HepG2 (cell line): ENCODE measurements at regions of chr22 and their contacts with region 1.

Region 1: DNA sequence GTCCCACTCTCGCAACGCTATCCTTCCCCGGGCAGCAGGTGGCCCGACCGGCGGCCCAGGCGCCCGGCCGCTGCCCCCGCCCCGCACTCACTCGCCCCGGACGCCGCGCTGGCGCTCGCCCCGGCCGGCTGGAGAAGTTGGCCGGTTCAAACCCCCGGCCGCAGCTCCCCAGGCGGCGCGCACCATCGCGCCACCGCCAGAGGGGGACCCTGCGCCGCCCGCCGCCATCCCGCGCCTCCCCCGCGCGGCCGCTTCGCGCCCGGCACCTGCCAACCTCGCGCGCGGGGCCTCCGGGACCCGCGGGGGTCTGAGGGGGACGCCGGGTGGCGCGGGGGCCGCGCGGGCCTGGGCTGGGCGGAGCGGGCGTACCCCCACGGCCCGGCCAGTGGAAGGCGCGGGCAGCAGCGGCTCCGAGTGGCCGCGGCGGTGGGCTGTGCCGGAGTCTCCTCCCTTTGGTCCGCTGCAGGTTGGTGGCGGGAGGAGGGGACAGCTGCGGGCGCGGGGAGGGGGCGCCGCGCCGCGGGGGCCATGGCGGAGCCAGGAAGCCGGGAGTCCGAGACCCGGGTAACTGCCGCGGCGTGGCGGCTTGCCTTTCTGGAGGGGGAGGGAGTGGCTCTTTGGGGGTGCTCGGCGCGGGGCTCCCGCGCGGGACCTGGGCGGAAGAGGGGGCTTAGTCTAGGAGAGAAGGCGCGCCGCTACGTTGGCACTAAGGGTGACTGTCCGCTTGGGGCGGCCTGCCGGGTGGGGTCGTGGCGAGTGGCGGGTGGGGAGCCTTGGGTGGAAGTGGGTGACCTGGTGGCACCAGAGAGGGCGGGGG is at the starts of genes MPST and TST:
- DNase-seq: peak; percentile 62
- ATAC-seq: peak; percentile 74
- H3K4me3 ChIP-seq: peak within 1 kb of the TSS; percentile 86 to 94 (median 92)
- H3K27ac ChIP-seq: peak within 1 kb of the TSS; percentile 88
- H3K4me1 ChIP-seq: peaks cover 79% of the 10 kb centered on the region
- H3K27me3 ChIP-seq: no peaks in the 10 kb centered on the region; a peak in 1 of 5 replicates
- CTCF ChIP-seq: 0 out of 2 replicates have a peak, but pooled peaks have one; percentile 8
- EP300 ChIP-seq: no peak
- POLR2A ChIP-seq: peak; percentile 65 to 85
- RAD21 ChIP-seq: peak; percentile 31; the same call in 1 of the 2 replicates
- total RNA-seq, gene MPST: 94.8 and 133 TPM in 2 replicates
- total RNA-seq, gene TST: 44.1 and 44.6 TPM in 2 replicates

Region 2: GRCh38 chr22:36986242-36986821 is 33.2 kb before region 1 on chr22:
- CTCF ChIA-PET with region 1: no interaction called
- POLR2A ChIA-PET with region 1: no interaction called
- in situ Hi-C with region 1: no loop called
- intact Hi-C with region 1: loop called (anchors 5 kb)
- DNase-seq: no peak
- ATAC-seq: no peak
- H3K4me3 ChIP-seq: no peak overlapping the region
- H3K27ac ChIP-seq: no peak overlapping the region
- H3K4me1 ChIP-seq: no peaks in the 10 kb centered on the region
- H3K27me3 ChIP-seq: peaks cover 2 to 23% of the 10 kb centered on the region in 2 experiments; a peak in 3 of 5 replicates
- CTCF ChIP-seq: peak; percentile 80
- EP300 ChIP-seq: no peak
- POLR2A ChIP-seq: no peak
- RAD21 ChIP-seq: 0 out of 2 replicates have a peak, but pooled peaks have one; percentile 19

Region 3: DNA sequence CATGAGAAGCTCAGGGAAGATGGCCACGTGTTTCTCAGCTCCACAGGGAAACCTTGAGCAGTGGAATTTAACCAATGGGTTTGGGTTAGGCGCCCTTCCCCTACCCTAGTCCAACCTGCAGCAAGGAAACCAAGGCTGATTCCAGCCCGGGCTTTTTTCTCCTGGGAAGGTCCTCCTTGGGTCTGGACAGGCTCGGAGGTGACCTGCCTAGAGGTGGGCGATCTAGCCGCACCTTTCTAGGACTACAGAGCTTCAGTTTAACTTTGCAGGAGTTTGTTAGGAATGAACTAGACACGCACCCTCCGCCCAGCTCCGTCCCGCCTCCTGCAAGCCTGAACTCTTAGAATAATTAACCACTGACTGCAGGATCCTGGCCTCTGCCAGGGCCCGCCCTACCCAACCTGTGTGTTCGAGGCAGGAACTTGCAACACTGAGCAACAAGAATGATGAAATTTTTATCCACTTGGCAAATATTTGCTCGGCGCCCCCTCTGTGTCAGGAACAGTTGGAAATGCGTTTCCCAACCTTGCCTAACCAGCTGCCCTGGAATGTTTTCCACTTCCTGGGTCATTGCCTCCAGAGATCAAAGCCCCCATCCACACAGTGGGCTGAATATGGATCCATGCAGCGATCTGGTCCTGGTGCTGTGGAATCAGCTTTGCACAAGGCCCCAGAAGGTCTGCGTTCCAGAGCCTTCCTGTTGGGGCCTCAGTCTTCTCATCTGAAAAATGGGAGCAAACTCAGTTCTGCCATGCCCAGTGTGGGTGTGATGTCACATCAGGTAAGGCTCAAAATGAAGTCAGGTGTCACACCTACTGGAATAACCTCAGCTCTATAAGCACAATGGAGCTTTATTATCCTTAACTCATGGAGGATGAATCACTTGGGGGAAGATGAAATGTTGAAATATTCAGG is 13.3 kb after region 1 on chr22:
- CTCF ChIA-PET with region 1: interaction called, 3 read pairs
- POLR2A ChIA-PET with region 1: interaction called, 383 read pairs
- in situ Hi-C with region 1: no loop called
- intact Hi-C with region 1: no loop called
- DNase-seq: peak; percentile 100
- ATAC-seq: peak; percentile 92
- H3K4me3 ChIP-seq: peak overlapping the region; percentile 43 to 69 (median 51)
- H3K27ac ChIP-seq: peak overlapping the region; percentile 99
- H3K4me1 ChIP-seq: peaks cover 89% of the 10 kb centered on the region
- H3K27me3 ChIP-seq: no peaks in the 10 kb centered on the region
- CTCF ChIP-seq: no peak
- EP300 ChIP-seq: peak; percentile 87 to 99; a peak in 3 of 4 replicates
- POLR2A ChIP-seq: peak; percentile 87 to 91
- RAD21 ChIP-seq: 0 out of 2 replicates have a peak, but pooled peaks have one; percentile 3

Region 4: GRCh38 chr22:37043828-37044538 is 24.5 kb after region 1 on chr22:
- CTCF ChIA-PET with region 1: interaction called, 7 read pairs
- POLR2A ChIA-PET with region 1: interaction called, 141 read pairs
- in situ Hi-C with region 1: no loop called
- intact Hi-C with region 1: no loop called
- DNase-seq: peak; percentile 77
- ATAC-seq: peak; percentile 95
- H3K4me3 ChIP-seq: peak overlapping the region in 2 of 3 experiments; percentile 38 to 62; a peak in 5 of 6 replicates
- H3K27ac ChIP-seq: peak overlapping the region; percentile 78
- H3K4me1 ChIP-seq: peaks cover 84% of the 10 kb centered on the region
- H3K27me3 ChIP-seq: 0 out of 5 replicates have a peak, but pooled peaks cover 0 to under 1% of the 10 kb centered on the region in 2 experiments
- CTCF ChIP-seq: peak; percentile 97
- EP300 ChIP-seq: peak in 1 of 2 experiments; percentile 4; a peak in 2 of 4 replicates
- POLR2A ChIP-seq: peak in 1 of 2 experiments; percentile 62; a peak in 2 of 4 replicates
- RAD21 ChIP-seq: peak; percentile 93

Region 5: DNA sequence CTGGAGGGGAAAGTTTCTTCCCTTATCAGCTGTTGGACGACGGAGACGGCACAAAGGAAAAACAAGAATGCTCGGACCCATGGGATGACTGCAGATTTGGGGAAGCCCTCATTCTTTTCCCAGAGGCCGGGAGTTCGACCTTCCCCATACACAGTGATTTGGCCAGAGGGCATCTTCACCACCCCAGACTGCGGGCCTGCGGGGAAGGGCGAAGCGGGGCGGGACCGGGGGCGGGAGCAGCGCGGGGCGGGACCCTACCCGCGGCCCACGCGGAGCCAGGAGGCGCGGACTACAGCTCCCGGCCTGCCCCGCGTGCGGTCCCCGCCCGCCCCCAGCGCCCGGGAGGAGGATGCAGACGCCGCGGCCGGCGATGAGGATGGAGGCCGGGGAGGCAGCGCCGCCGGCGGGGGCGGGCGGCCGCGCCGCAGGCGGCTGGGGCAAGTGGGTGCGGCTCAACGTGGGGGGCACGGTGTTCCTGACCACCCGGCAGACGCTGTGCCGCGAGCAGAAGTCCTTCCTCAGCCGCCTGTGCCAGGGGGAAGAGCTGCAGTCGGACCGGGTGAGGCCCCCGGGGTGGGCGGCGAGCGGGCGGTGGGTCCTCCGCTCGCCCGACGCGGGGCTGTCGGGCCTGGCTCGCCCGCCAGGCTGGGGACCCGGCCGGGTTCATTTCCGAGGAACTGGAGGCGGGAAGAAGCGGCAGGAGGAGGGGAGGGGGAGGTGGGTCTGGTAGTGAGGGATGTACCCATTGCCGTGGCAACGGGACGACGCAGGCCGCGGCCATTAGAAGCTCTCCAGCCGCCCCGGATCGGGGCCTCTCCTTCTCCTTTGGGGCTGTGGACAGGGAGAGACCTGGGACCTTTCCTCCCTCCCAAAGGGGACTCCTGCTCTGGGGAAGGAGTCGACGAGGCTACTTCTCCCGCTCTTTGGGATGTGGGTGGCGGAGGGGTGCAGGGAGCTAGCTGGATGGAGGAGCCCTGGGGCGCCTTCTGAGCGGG is 32.2 kb after region 1 on chr22 and contains the start of gene KCTD17:
- CTCF ChIA-PET with region 1: no interaction called
- POLR2A ChIA-PET with region 1: interaction called, 141 read pairs
- in situ Hi-C with region 1: no loop called
- intact Hi-C with region 1: no loop called
- DNase-seq: no peak
- ATAC-seq: peak; percentile 86
- H3K4me3 ChIP-seq: peak within 1 kb of the TSS; percentile 51 to 71 (median 54)
- H3K27ac ChIP-seq: no peak within 1 kb of the TSS
- H3K4me1 ChIP-seq: peaks cover 51% of the 10 kb centered on the region
- H3K27me3 ChIP-seq: peaks cover 0 to 13% of the 10 kb centered on the region in 2 experiments; a peak in 2 of 5 replicates
- CTCF ChIP-seq: no peak
- EP300 ChIP-seq: no peak
- POLR2A ChIP-seq: no peak
- RAD21 ChIP-seq: no peak
- total RNA-seq, gene KCTD17: 4.5 and 5.3 TPM in 2 replicates

Region 6: DNA sequence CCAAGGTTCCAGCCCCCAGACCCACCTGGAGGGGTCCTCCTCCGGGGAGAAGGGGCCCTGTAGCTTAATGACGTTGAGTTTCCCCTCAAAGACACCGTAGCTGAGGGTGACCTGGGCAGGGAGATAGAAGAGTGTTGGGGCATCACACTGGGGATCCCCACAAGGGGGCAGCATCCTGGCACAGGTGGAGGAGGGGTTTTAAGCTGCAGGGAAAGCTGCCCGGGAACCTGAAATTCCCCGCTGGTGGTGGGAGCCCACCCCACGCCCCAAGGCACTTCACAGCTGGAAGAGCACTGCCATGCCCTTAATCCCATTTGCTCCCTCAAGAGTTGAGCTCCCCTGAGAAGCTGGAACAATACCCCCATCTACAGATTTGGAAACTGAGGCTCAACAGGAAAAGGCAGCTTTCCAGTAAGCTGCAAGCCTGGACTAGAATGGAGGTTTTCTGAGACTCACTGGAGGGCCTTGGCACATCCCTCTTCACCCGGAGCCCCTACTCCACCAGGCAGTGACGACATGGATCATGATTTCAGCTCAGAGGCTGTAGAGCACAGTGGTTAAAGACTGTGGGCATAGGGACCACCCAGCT is 453.0 kb after region 1 on chr22:
- CTCF ChIA-PET with region 1: no interaction called
- POLR2A ChIA-PET with region 1: no interaction called
- in situ Hi-C with region 1: no loop called
- intact Hi-C with region 1: no loop called
- DNase-seq: peak; percentile 46
- ATAC-seq: peak; percentile 68
- H3K4me3 ChIP-seq: no peak overlapping the region
- H3K27ac ChIP-seq: no peak overlapping the region
- H3K4me1 ChIP-seq: peaks cover 19% of the 10 kb centered on the region
- H3K27me3 ChIP-seq: peaks cover 0 to 7% of the 10 kb centered on the region in 2 experiments; a peak in 2 of 5 replicates
- CTCF ChIP-seq: peak; percentile 88
- EP300 ChIP-seq: no peak
- POLR2A ChIP-seq: no peak
- RAD21 ChIP-seq: peak; percentile 76